Esophagus squamous epithelium (tissue), 5 donors: ENCODE measurements at regions of chr12 and their contacts with region 1.

Region 1: GRCh38 chr12:4526923-4527546 is 11.7 kb upstream of the RAD51AP1 start:
- DNase-seq: no peak
- H3K4me3 ChIP-seq: no peak overlapping the region
- H3K27ac ChIP-seq: no peak overlapping the region
- H3K4me1 ChIP-seq: no peaks in the 10 kb centered on the region
- H3K27me3 ChIP-seq: no peaks in the 10 kb centered on the region
- CTCF ChIP-seq: peak in 5 of 6 experiments; percentile 11 to 64 (median 55)
- POLR2A ChIP-seq: no peak

Region 2: GRCh38 chr12:3797531-3798049 is 729.4 kb before region 1 on chr12:
- intact Hi-C with region 1: no loop called
- DNase-seq: no peak
- H3K4me3 ChIP-seq: no peak overlapping the region
- H3K27ac ChIP-seq: no peak overlapping the region
- H3K4me1 ChIP-seq: no peaks in the 10 kb centered on the region
- H3K27me3 ChIP-seq: no peaks in the 10 kb centered on the region
- CTCF ChIP-seq: no peak
- POLR2A ChIP-seq: no peak

Region 3: GRCh38 chr12:4421590-4422031 is 105.4 kb before region 1 on chr12:
- intact Hi-C with region 1: loop called (anchors 5 kb)
- DNase-seq: no peak
- H3K4me3 ChIP-seq: no peak overlapping the region
- H3K27ac ChIP-seq: no peak overlapping the region
- H3K4me1 ChIP-seq: no peaks in the 10 kb centered on the region
- H3K27me3 ChIP-seq: peaks cover 0 to 31% (median 0%) of the 10 kb centered on the region in 4 donors
- CTCF ChIP-seq: peak in 5 of 6 experiments; percentile 42 to 59 (median 51)
- POLR2A ChIP-seq: no peak